Right ventricle myocardium inferior (tissue), 1 donor: ENCODE measurements at regions of chr18 and their contacts with region 1.

Region 1: DNA sequence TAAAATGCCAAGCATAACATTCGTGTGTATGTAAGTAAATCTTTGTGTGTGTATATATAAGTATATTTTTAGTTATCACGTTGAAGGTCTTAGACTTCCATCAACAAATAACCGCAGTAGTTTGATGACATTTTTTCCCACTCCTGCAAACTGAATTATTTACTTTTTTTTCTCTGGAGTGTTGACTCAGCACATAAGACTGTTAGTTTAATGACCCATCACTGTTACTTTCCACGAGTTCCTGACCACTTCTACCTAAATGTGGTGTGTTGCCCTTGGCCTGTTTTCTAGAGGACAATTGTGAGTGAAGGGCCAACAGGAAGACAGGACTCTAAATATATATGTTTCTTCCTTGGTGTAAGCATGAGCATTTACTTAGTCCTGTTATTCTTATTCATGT is 71.3 kb upstream of the TXNDC2 start:
- DNase-seq: no peak
- ATAC-seq: no peak

Region 2: DNA sequence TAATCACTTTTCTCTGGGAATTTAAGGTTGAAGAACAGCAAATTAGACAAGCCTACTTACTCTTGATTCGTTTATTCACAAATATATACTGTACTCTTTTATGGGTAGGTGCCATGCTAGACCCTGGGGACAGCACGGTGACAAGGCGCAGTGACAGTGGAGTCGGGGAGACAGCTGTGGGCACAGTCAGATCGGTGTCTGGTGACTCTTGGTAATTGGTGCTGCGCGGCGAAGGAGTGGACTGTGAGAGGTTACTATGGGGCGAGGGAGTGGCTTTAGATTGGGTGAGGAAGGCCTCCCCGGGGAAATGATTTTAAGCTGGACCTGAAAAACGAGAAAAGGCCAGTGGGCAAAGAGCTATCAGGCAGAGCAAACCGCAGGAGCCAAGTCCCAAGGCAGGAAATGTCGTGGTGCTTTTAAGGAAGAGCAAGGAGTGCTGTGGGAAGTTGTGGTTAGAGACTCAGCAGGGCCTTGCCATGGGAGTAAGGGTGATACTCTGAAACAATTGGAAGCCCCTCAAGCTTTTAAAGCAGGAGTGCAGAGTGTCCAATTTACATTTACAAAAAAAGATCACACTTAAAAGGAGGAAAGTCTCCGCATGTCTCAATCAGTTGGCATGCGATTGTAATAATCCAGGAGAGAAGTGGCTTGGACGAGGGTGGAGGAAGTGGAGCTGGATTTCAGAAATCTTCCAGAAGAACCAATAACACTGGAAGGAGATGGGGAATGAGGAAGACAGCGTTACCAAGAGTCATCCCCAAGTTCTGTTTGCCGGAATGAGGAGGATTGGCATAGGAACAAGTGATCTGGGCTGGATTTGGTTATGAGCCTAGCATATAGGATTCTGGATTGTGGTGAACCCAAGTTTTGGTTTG is 35.2 kb after region 1 on chr18:
- intact Hi-C with region 1: loop called (anchors 5 kb)
- DNase-seq: peak; percentile 80
- ATAC-seq: peak; percentile 72